ENCODE measurements at regions of chr1 and their contacts with region 1.

Region 1: DNA sequence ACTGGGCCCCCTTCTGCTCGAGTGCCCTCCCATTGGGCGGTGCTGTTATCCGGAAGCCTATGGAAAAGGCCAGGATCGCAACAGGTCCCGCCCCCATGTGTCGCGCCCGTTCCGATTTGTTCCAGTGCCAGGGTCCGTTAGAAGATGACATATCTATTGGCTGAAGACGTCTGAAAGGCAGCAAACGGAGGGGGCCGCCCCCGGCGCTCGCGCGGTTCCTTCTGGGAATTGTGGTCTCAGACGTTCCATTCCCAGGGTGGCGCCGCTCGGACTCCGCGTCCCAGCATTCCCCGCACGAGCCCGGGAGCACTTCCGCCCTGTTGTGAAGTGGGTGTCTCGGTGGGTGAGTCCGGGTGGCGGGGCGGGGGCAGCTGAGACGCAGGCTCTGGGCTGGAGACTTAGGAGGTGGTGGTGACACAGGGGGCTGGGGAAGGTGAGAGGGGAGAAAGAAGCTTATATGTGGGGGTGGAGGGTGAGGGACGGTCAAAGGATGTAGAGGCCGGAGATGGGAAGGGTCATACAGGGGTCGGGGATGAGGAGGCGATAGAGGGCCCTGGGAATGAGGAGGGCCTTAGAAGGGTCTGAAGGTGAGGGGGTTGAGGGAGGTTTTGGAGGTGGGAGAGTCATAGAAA is at the start of gene ZSCAN20:
- DNase-seq: peak; percentile 95
- H3K4me3 ChIP-seq: peak within 1 kb of the TSS; percentile 86
- H3K27ac ChIP-seq: peak within 1 kb of the TSS; percentile 42
- H3K27me3 ChIP-seq: no peaks in the 10 kb centered on the region
- CTCF ChIP-seq: no peak
- polyA plus RNA-seq, gene ZSCAN20: 3.5 and 3.9 TPM in 2 replicates

Region 2: GRCh38 chr1:32234792-32235191 is 1237.7 kb before region 1 on chr1:
- CTCF ChIA-PET with region 1: no interaction called
- POLR2A ChIA-PET with region 1: no interaction called
- DNase-seq: no peak
- H3K4me3 ChIP-seq: no peak overlapping the region
- H3K27ac ChIP-seq: peak overlapping the region; percentile 12
- H3K27me3 ChIP-seq: no peaks in the 10 kb centered on the region
- CTCF ChIP-seq: no peak

Region 3: GRCh38 chr1:33319949-33320605 is 152.4 kb before region 1 on chr1:
- CTCF ChIA-PET with region 1: interaction called, 12 read pairs
- POLR2A ChIA-PET with region 1: interaction called, 3 read pairs
- DNase-seq: no peak
- H3K4me3 ChIP-seq: no peak overlapping the region
- H3K27ac ChIP-seq: no peak overlapping the region
- H3K27me3 ChIP-seq: no peaks in the 10 kb centered on the region
- CTCF ChIP-seq: no peak

Region 4: GRCh38 chr1:33374336-33375105 is 97.9 kb before region 1 on chr1:
- CTCF ChIA-PET with region 1: interaction called, 25 read pairs
- POLR2A ChIA-PET with region 1: no interaction called
- DNase-seq: no peak
- H3K4me3 ChIP-seq: no peak overlapping the region
- H3K27ac ChIP-seq: peak overlapping the region; percentile 83
- H3K27me3 ChIP-seq: no peaks in the 10 kb centered on the region
- CTCF ChIP-seq: no peak

Region 5: DNA sequence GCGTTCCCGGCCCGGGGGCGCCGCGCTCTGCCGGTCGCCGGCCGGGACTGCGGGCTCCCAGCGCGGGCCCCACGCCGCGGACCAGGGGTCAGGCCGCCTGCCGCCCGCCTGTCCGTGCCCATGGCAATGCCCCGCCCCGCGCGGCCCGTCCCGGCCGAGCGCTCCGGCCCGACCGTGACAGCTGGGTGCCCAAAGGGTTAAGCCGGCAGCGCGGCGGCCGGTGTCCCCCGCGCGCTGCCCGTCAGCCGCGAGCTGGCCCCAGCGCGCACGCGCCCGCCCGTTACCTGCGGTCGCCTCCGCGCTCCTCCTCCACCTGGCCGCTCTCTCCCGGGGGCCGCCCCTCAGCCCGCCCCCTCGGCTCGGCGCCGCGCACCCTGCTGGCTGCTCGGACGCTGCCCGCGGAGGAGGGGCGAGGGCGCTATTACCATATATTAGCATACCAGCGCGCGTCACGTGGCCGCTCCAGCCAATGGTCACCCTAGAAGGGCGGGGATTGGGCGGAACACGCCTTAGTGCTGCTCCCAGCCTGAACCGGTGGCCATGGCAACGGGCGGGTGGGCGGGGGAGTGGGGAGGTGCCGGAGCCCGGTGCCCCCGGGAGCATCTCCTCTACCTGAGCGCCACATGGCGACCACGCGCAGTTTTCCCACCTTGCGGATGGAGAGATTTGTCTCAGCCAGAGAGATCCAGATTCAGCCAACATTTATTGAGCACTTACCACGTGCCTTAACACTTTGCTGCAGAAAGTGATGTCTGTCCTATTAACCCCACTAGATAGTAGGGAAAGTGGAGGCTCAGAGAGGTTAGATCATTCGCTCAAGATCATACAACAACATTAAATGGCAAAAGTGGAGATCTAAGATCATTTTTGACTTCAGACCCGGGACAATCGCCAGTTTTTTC is 41.5 kb before region 1 on chr1 and contains the start of gene PHC2:
- CTCF ChIA-PET with region 1: interaction called, 18 read pairs
- POLR2A ChIA-PET with region 1: no interaction called
- DNase-seq: peak; percentile 81
- H3K4me3 ChIP-seq: peak within 1 kb of the TSS; percentile 71
- H3K27ac ChIP-seq: no peak within 1 kb of the TSS
- H3K27me3 ChIP-seq: no peaks in the 10 kb centered on the region
- CTCF ChIP-seq: peak; percentile 32
- polyA plus RNA-seq, gene PHC2: 47.1 and 78.6 TPM in 2 replicates

Region 6: DNA sequence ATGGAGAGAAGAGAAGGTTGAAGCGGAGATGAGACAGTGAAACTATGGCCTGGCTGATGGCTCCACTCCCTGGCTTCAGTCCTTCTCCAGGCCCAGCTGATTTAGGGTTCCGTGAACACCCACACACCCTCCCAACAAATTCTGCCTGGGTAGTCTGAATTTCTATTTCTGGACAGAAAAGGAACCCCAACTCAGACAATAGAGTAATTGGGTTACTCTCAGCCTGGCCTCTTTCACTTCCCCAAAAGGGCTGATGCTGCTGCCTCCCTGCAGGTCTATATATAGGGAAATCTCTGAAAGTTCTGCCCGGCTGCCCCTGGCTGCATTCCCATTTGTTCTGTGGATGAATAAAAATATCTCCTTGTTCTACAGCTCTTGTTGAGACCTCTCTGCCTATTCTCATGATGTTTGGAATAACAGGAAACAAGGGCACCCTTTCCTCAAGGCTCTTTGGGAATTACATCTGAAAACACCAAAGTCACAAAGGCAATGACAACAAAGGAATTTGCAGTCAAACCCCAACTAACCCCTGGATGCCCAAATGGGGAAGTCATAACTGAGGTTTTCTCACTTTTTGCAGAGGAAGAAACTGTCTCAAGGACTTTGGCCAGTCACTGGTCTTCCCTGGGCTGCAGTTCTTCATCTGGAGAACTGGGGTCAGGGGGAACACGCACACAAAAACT is 11.4 kb before region 1 on chr1:
- CTCF ChIA-PET with region 1: interaction called, 15 read pairs
- POLR2A ChIA-PET with region 1: interaction called, 4 read pairs
- DNase-seq: no peak
- H3K4me3 ChIP-seq: no peak overlapping the region
- H3K27ac ChIP-seq: no peak overlapping the region
- H3K27me3 ChIP-seq: no peaks in the 10 kb centered on the region
- CTCF ChIP-seq: no peak

Region 7: GRCh38 chr1:33683913-33684312 is 211.4 kb after region 1 on chr1:
- CTCF ChIA-PET with region 1: no interaction called
- POLR2A ChIA-PET with region 1: no interaction called
- DNase-seq: no peak
- H3K4me3 ChIP-seq: no peak overlapping the region
- H3K27ac ChIP-seq: no peak overlapping the region
- H3K27me3 ChIP-seq: no peaks in the 10 kb centered on the region
- CTCF ChIP-seq: no peak

Measured in AG04450 (cell line).